A673 (cell line): ENCODE measurements at regions of chr7 and their contacts with region 1.

Region 1: GRCh38 chr7:55255496-55256435 is 109.4 kb upstream of the LANCL2 start:
- DNase-seq: peak; percentile 89
- H3K4me3 ChIP-seq: peak overlapping the region; percentile 41
- H3K27ac ChIP-seq: no peak overlapping the region
- H3K4me1 ChIP-seq: peaks cover 6% of the 10 kb centered on the region
- H3K27me3 ChIP-seq: peaks cover 24% of the 10 kb centered on the region
- CTCF ChIP-seq: peak; percentile 95

Region 2: GRCh38 chr7:54788664-54789063 is 467.1 kb before region 1 on chr7:
- CTCF ChIA-PET with region 1: interaction called, 50 read pairs
- POLR2A ChIA-PET with region 1: no interaction called
- intact Hi-C with region 1: loop called (anchors 1 kb)
- DNase-seq: peak; percentile 78
- H3K4me3 ChIP-seq: no peak overlapping the region
- H3K27ac ChIP-seq: no peak overlapping the region
- H3K4me1 ChIP-seq: no peaks in the 10 kb centered on the region
- H3K27me3 ChIP-seq: peaks cover 5% of the 10 kb centered on the region
- CTCF ChIP-seq: peak; percentile 70

Region 3: GRCh38 chr7:55018361-55019190 is 237.2 kb before region 1 on chr7 and contains the start of gene EGFR:
- CTCF ChIA-PET with region 1: no interaction called
- POLR2A ChIA-PET with region 1: no interaction called
- intact Hi-C with region 1: loop called (anchors 10 kb)
- DNase-seq: peak; percentile 21
- H3K4me3 ChIP-seq: peak within 1 kb of the TSS; percentile 40
- H3K27ac ChIP-seq: no peak within 1 kb of the TSS
- H3K4me1 ChIP-seq: peaks cover 5% of the 10 kb centered on the region
- H3K27me3 ChIP-seq: peaks cover 93% of the 10 kb centered on the region
- CTCF ChIP-seq: no peak
- total RNA-seq, gene EGFR: 0.59 and 0.84 TPM in 2 replicates

Region 4: DNA sequence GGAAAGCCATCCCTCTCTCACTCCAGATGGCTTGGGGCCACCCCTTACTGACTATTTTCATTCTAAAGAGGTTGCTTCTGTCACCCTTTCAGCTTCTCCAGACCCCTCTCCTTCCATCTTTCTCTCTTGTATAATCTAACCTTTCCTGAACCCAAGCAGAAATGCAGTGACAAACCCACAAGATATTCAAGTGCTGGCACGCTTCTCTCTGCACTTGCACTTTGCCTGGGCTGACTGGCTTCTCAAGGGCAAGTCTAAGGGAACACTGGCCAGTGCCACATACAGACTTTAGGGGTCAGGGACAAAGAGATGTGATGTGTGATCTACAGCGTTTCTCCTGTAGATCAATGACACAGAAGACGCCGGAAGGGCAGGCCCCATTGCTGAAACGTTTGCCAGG is 41.1 kb before region 1 on chr7:
- CTCF ChIA-PET with region 1: no interaction called
- POLR2A ChIA-PET with region 1: no interaction called
- intact Hi-C with region 1: no loop called
- DNase-seq: no peak
- H3K4me3 ChIP-seq: no peak overlapping the region
- H3K27ac ChIP-seq: no peak overlapping the region
- H3K4me1 ChIP-seq: no peaks in the 10 kb centered on the region
- H3K27me3 ChIP-seq: no peaks in the 10 kb centered on the region
- CTCF ChIP-seq: no peak